Psoas muscle (tissue), 8 donors: ENCODE measurements at regions of chr5 and their contacts with region 1.

Region 1: DNA sequence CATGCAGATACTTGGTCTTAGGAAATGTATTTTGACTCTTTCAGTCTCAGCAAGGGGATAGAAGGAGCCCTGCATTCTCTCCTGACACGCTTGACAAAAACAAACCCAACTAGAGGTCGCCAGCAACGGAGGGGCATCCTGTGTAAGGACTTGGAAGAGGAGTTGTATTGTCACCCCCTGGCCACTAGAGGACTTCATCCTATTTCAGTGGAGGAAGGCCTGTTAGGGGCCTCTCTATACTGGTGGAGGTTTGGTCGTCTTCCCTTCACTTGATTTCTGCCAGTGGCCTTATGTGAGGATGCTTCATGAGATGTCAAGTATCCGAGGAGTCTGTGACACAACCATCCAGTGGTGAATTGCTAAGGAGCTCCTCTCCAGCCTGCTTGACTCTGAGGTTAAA is 122.8 kb upstream of the STC2 start:
- DNase-seq: no peak
- ATAC-seq: peak in 2 of 4 donors; percentile 33 to 43
- H3K4me3 ChIP-seq: no peak overlapping the region
- H3K27ac ChIP-seq: peak overlapping the region; percentile 96
- H3K4me1 ChIP-seq: peaks cover 44% of the 10 kb centered on the region
- H3K27me3 ChIP-seq: no peaks in the 10 kb centered on the region
- CTCF ChIP-seq: peak; percentile 40

Region 2: GRCh38 chr5:173498286-173498685 is 47.3 kb after region 1 on chr5:
- intact Hi-C with region 1: loop called (anchors 1 to 5 kb)
- DNase-seq: peak; percentile 22 to 70
- ATAC-seq: peak; percentile 56 to 80 (median 74)
- H3K4me3 ChIP-seq: peak overlapping the region; percentile 33
- H3K27ac ChIP-seq: peak overlapping the region; percentile 87
- H3K4me1 ChIP-seq: peaks cover 59% of the 10 kb centered on the region
- H3K27me3 ChIP-seq: no peaks in the 10 kb centered on the region
- CTCF ChIP-seq: no peak

Region 3: GRCh38 chr5:173573126-173573960 is 122.3 kb after region 1 on chr5:
- intact Hi-C with region 1: loop called in 1 of 2 experiments (anchors 5 kb)
- DNase-seq: peak; percentile 73 to 90
- ATAC-seq: peak; percentile 94 to 99 (median 97)
- H3K4me3 ChIP-seq: peak overlapping the region; percentile 45
- H3K27ac ChIP-seq: no peak overlapping the region
- H3K4me1 ChIP-seq: no peaks in the 10 kb centered on the region
- H3K27me3 ChIP-seq: no peaks in the 10 kb centered on the region
- CTCF ChIP-seq: peak; percentile 96

Region 4: GRCh38 chr5:173764321-173765029 is 313.4 kb after region 1 on chr5:
- intact Hi-C with region 1: loop called (anchors 10 kb)
- DNase-seq: peak; percentile 88 to 95
- ATAC-seq: peak; percentile 74 to 81 (median 79)
- H3K4me3 ChIP-seq: no peak overlapping the region
- H3K27ac ChIP-seq: peak overlapping the region; percentile 86
- H3K4me1 ChIP-seq: peaks cover 45% of the 10 kb centered on the region
- H3K27me3 ChIP-seq: no peaks in the 10 kb centered on the region
- CTCF ChIP-seq: no peak